MCF 10A (cell line): ENCODE measurements at regions of chr1 and their contacts with region 1.

Region 1: DNA sequence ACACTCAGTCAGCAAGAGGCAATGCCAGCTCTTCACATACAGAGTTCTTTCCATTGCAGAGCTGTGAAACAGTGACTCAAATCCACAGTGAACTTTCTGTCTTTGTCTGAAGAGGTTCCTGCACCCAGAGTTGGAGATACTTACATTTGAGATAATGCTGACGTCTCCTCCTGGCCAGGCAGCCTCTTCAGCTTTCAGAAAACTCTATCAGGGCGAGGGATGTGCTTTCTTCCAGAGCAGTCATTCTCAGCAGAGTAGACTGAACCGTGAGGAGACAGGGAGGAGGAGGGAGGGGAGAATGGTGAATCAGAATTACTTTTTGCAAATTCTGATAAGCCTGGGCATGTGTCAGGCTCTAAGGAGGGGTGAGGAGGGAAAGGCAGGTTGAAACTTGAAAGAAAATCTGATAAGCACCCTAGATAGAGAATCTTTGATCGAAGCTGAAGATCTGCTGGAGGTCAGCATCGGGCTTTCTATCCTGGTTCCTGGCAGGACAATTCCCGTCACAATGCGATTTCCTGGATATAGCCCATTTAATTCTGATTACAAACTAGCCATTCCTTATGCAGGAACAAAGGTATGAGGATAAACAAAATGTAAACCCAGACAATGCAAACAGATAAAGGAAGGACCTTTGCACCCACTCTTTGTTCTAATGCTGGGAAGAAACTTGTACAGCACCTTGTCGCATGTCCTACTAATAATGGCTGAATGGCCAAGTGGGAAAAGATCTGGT is 18.9 kb upstream of the NID1 start:
- DNase-seq: peak; percentile 34
- H3K4me3 Mint-ChIP-seq: peak overlapping the region; percentile 58
- H3K27ac Mint-ChIP-seq: peak overlapping the region; percentile 17
- H3K4me1 Mint-ChIP-seq: peaks cover 11% of the 10 kb centered on the region
- H3K27me3 Mint-ChIP-seq: no peaks in the 10 kb centered on the region
- CTCF ChIP-seq: no peak

Region 2: GRCh38 chr1:236018885-236019453 is 64.8 kb before region 1 on chr1:
- CTCF ChIA-PET with region 1: no interaction called
- POLR2A ChIA-PET with region 1: interaction called, 24 read pairs
- intact Hi-C with region 1: no loop called
- DNase-seq: no peak
- H3K4me3 Mint-ChIP-seq: no peak overlapping the region
- H3K27ac Mint-ChIP-seq: no peak overlapping the region
- H3K4me1 Mint-ChIP-seq: peaks cover 18% of the 10 kb centered on the region
- H3K27me3 Mint-ChIP-seq: no peaks in the 10 kb centered on the region
- CTCF ChIP-seq: no peak